ENCODE measurements at regions of chr19 and their contacts with region 1.

Region 1: DNA sequence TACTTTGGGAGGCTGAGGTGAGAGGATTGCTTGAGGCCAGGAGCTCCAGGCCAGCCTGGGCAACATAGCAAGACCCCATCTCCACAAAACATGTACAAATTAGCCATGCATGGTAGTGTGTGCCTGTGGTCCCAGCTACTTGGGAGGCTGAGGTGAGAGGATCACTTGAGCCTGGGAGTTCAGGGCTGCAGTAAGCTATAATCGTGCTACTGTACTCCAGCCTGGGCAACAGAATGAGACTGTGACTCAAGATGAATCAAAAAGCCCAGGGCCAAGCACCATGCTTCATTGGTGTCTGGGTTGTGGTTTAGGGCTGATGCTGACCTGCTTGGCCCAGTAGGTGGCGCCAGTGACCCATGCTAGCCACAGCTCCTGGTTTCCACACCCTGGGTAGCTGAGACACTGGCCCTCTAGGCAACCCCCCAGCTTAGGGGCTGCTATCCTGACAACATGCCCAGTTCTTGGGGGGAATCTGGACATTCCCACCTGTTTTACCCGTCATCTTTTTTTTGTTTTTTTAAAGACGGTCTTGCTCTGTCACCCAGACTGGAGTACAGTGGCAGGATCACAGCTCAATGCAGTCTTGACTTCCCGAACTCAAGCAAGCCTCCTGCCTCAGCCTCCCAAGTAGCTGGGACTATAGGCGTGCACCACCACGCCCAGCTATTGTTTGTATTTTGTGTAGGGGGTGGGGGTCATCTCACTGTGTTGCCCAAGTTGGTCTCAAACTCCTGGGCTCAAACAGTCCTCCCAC is 5.5 kb downstream of the CCDC124 start:
- DNase-seq: peak; percentile 72
- ATAC-seq: peak; percentile 94
- H3K4me3 ChIP-seq: no peak overlapping the region
- H3K27ac ChIP-seq: no peak overlapping the region
- H3K4me1 ChIP-seq: peaks cover 4% of the 10 kb centered on the region; the same call in 1 of the 2 replicates
- H3K27me3 ChIP-seq: no peaks in the 10 kb centered on the region
- CTCF ChIP-seq: peak; percentile 91

Region 2: GRCh38 chr19:17859533-17860330 is 78.5 kb before region 1 on chr19 and contains the start of gene RPL18A:
- CTCF ChIA-PET with region 1: interaction called, 13 read pairs
- POLR2A ChIA-PET with region 1: interaction called, 6 read pairs
- in situ Hi-C with region 1: no loop called
- intact Hi-C with region 1: no loop called
- DNase-seq: peak; percentile 97
- ATAC-seq: peak; percentile 93
- H3K4me3 ChIP-seq: peak within 1 kb of the TSS; percentile 96 to 99
- H3K27ac ChIP-seq: peak within 1 kb of the TSS; percentile 98
- H3K4me1 ChIP-seq: peaks cover 25% of the 10 kb centered on the region
- H3K27me3 ChIP-seq: no peaks in the 10 kb centered on the region
- CTCF ChIP-seq: peak; percentile 94
- total RNA-seq, gene RPL18A: 1,352 TPM

Region 3: DNA sequence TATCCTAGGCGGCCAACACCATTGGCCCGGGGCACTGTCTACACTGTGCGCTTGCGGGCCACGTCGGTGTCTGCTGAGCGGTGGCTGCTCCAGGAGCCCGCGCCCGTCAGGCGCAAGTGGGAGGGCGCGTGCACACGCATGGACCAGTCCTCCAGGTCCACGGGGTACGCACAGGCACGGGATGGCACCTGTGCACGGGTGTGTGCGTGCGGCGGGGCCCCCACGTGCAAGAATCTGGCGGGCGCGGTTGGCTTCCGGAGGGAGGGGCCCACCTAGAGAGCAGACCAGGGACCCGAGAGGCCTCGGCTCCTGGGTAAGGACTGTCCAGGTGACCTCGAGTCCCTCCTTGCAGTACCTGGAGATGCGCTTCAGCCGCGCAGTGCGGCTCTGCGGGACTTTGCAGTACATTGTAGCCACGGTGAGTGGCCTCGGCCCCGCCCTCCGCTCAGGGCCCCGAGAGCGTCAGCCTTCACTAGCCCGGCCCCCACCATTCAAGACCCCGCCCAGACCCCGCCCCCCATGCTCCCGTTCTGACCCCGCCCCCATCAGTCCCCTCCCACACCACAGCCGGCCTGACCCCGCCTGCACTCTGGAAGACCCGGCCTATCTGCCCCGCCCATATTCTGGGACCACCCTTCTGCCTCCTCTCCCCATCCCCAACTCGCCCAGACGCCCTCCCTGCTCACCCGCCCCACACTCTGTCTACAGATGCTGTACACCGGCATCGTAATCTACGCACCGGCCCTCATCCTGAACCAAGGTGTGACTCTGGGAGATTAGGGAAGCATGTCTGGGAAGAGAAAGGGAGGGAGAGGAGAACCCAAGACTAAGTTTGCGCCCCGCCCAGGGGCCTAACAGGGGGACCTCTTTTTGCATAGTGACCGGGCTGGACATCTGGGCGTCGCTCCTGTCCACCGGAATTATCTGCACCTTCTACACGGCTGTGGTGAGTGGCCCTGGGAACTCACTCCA is 64.2 kb before region 1 on chr19:
- CTCF ChIA-PET with region 1: interaction called, 23 read pairs
- POLR2A ChIA-PET with region 1: no interaction called
- in situ Hi-C with region 1: no loop called
- intact Hi-C with region 1: no loop called
- DNase-seq: no peak
- ATAC-seq: peak; percentile 76
- H3K4me3 ChIP-seq: peak overlapping the region; percentile 39 to 55
- H3K27ac ChIP-seq: no peak overlapping the region
- H3K4me1 ChIP-seq: no peaks in the 10 kb centered on the region
- H3K27me3 ChIP-seq: no peaks in the 10 kb centered on the region
- CTCF ChIP-seq: no peak

Region 4: DNA sequence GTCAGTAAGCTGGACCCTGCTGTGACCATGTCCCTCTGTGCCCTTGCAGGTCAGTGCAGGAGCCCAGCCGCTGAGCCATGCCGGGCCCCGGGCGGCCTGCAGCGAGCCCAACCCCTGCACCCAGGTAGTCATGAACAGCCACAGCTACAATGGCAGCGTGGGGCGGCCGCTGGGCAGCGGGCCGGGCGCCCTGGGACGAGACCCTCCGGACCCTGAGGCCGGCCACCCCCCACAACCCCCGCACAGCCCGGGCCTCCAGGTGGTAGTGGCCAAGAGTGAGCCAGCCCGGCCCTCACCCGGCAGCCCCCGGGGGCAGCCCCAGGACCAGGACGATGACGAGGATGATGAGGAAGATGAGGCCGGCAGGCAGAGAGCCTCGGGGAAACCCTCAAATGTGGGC is 35.5 kb after region 1 on chr19:
- CTCF ChIA-PET with region 1: no interaction called
- POLR2A ChIA-PET with region 1: no interaction called
- in situ Hi-C with region 1: no loop called
- intact Hi-C with region 1: no loop called
- DNase-seq: no peak
- ATAC-seq: no peak
- H3K4me3 ChIP-seq: no peak overlapping the region
- H3K27ac ChIP-seq: no peak overlapping the region
- H3K4me1 ChIP-seq: no peaks in the 10 kb centered on the region
- H3K27me3 ChIP-seq: no peaks in the 10 kb centered on the region
- CTCF ChIP-seq: no peak

Region 5: DNA sequence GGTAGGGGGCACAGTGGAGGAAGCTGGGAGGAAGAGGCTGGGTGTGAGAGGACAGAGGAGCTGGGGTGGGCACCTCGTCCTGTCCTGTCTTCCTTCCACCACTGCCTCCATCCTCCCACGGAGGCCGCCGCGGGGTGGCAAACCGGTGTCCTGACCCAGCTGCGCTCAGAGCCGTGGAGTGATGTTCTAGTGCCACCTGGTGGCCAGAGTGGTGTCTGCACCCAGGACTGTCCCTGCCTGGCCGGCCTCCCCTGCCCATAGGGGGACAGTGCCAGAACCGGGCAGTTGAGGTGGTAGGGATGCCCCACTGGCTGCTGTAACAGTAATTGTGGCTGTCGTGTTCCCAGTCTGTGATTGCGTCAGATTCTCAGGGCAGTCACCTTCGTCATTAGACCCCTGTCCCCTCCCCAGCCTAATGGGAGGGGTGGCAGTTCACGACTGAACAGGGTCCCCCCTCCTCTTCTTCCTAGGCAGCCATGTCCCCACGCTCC is 58.6 kb after region 1 on chr19:
- CTCF ChIA-PET with region 1: interaction called, 23 read pairs
- POLR2A ChIA-PET with region 1: interaction called, 12 read pairs
- in situ Hi-C with region 1: no loop called
- intact Hi-C with region 1: loop called (anchors 1 kb)
- DNase-seq: peak; percentile 52
- ATAC-seq: peak; percentile 80
- H3K4me3 ChIP-seq: peak overlapping the region; percentile 30 to 41; a peak in 3 of 4 replicates
- H3K27ac ChIP-seq: no peak overlapping the region
- H3K4me1 ChIP-seq: peaks cover 13% of the 10 kb centered on the region
- H3K27me3 ChIP-seq: no peaks in the 10 kb centered on the region
- CTCF ChIP-seq: peak; percentile 89